ENCODE measurements at regions of chr16 and their contacts with region 1.

Region 1: GRCh38 chr16:27109666-27110523 is 43.2 kb downstream of the C16orf82 start:
- DNase-seq: peak; percentile 47
- ATAC-seq: peak; percentile 98
- H3K4me3 ChIP-seq: peak overlapping the region; percentile 46
- H3K27ac ChIP-seq: peak overlapping the region; percentile 17; the same call in 1 of the 2 replicates
- H3K4me1 ChIP-seq: no peaks in the 10 kb centered on the region
- H3K27me3 ChIP-seq: no peaks in the 10 kb centered on the region
- CTCF ChIP-seq: peak; percentile 91
- POLR2A ChIP-seq: no peak
- RAD21 ChIP-seq: peak; percentile 92

Region 2: DNA sequence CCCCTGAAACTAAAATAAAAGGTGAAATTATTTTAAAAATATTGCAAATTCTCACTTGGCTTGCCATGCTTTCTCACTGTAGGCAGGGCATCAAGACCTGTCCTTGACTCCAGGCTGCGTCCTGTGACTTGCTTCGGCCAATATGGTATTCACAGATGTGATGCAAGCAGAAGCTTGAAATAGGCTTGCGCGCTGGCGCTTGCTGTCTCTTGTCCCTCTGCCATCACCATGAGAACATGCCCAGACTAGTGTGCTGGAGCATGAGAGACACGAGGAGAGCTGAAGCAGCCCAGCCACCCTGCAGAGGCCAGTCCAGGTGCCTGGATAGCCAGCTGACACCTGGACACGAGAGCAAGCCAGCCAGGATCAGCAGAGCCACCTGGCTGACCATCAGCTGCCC is 1830.4 kb before region 1 on chr16:
- CTCF ChIA-PET with region 1: interaction called, 9 read pairs
- POLR2A ChIA-PET with region 1: no interaction called
- dilution Hi-C with region 1: no loop called
- in situ Hi-C with region 1: loop called (anchors 5 kb)
- intact Hi-C with region 1: no loop called
- DNase-seq: no peak
- ATAC-seq: no peak
- H3K4me3 ChIP-seq: no peak overlapping the region
- H3K27ac ChIP-seq: no peak overlapping the region
- H3K4me1 ChIP-seq: no peaks in the 10 kb centered on the region
- H3K27me3 ChIP-seq: no peaks in the 10 kb centered on the region
- CTCF ChIP-seq: no peak
- POLR2A ChIP-seq: no peak
- RAD21 ChIP-seq: no peak

Region 3: GRCh38 chr16:25838724-25839186 is 1271.1 kb before region 1 on chr16:
- CTCF ChIA-PET with region 1: interaction called, 8 read pairs
- POLR2A ChIA-PET with region 1: no interaction called
- dilution Hi-C with region 1: no loop called
- in situ Hi-C with region 1: loop called (anchors 5 kb)
- intact Hi-C with region 1: loop called (anchors 1 kb)
- DNase-seq: peak; percentile 41
- ATAC-seq: peak; percentile 68
- H3K4me3 ChIP-seq: no peak overlapping the region
- H3K27ac ChIP-seq: no peak overlapping the region
- H3K4me1 ChIP-seq: no peaks in the 10 kb centered on the region
- H3K27me3 ChIP-seq: no peaks in the 10 kb centered on the region
- CTCF ChIP-seq: peak; percentile 75
- POLR2A ChIP-seq: no peak
- RAD21 ChIP-seq: peak; percentile 58

Region 4: DNA sequence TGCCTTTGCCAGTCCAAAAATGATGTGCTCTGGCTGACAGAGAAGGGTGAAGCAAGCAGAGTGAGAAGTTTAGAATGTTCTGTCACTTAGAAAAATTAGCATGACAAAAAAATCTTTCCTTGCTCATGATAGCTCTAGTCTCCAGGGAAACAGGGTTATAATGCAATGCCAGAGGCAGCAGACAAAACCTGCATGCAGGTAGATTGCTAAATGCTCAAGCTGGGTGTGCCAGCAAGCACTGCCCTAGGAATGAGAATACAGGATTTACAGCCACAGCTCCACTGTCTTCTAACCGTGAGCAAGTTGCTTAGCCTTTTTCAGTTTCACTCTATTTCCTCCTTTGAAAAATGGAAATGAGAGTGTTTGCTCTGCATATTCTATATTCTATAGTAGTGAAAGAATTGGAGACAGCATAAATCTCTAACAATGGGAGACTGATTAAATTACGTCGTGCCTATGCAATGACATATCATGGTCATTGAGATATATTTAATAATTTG is 559.7 kb before region 1 on chr16:
- CTCF ChIA-PET with region 1: no interaction called
- POLR2A ChIA-PET with region 1: no interaction called
- dilution Hi-C with region 1: no loop called
- in situ Hi-C with region 1: no loop called
- intact Hi-C with region 1: no loop called
- DNase-seq: no peak
- ATAC-seq: no peak
- H3K4me3 ChIP-seq: no peak overlapping the region
- H3K27ac ChIP-seq: no peak overlapping the region
- H3K4me1 ChIP-seq: no peaks in the 10 kb centered on the region
- H3K27me3 ChIP-seq: no peaks in the 10 kb centered on the region
- CTCF ChIP-seq: no peak
- POLR2A ChIP-seq: no peak
- RAD21 ChIP-seq: no peak

Region 5: GRCh38 chr16:26951947-26952346 is 157.9 kb before region 1 on chr16:
- CTCF ChIA-PET with region 1: no interaction called
- POLR2A ChIA-PET with region 1: no interaction called
- dilution Hi-C with region 1: no loop called
- in situ Hi-C with region 1: no loop called
- intact Hi-C with region 1: no loop called
- DNase-seq: peak; percentile 18
- ATAC-seq: peak; percentile 79
- H3K4me3 ChIP-seq: no peak overlapping the region
- H3K27ac ChIP-seq: no peak overlapping the region
- H3K4me1 ChIP-seq: no peaks in the 10 kb centered on the region
- H3K27me3 ChIP-seq: peaks cover 4% of the 10 kb centered on the region; the same call in 1 of the 2 replicates
- CTCF ChIP-seq: no peak
- POLR2A ChIP-seq: no peak
- RAD21 ChIP-seq: no peak

Region 6: DNA sequence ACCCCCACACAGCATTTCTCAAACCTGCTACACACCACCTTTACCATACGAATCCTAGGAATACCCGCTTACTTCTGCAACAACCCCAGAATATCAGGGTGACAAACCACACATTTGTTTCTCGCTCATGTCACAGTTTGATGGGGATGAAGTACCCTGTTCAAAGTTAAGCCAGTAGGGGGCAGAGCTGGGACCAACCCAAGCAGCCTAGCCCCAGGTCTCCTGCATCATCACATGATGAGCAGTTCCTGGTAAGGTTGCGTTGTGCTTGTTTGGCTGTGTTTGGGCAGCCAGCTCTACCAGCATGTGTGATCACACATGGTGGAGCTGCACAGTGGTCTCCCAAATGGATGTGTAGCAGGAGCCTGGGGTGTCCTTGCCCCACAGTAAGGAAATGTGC is 146.8 kb before region 1 on chr16:
- CTCF ChIA-PET with region 1: interaction called, 9 read pairs
- POLR2A ChIA-PET with region 1: no interaction called
- dilution Hi-C with region 1: no loop called
- in situ Hi-C with region 1: no loop called
- intact Hi-C with region 1: loop called (anchors 1 kb)
- DNase-seq: peak; percentile 36
- ATAC-seq: peak; percentile 54; the same call in 1 of the 2 replicates
- H3K4me3 ChIP-seq: no peak overlapping the region
- H3K27ac ChIP-seq: no peak overlapping the region
- H3K4me1 ChIP-seq: no peaks in the 10 kb centered on the region
- H3K27me3 ChIP-seq: peaks cover 18% of the 10 kb centered on the region
- CTCF ChIP-seq: peak; percentile 43
- POLR2A ChIP-seq: no peak
- RAD21 ChIP-seq: peak; percentile 52

Region 7: DNA sequence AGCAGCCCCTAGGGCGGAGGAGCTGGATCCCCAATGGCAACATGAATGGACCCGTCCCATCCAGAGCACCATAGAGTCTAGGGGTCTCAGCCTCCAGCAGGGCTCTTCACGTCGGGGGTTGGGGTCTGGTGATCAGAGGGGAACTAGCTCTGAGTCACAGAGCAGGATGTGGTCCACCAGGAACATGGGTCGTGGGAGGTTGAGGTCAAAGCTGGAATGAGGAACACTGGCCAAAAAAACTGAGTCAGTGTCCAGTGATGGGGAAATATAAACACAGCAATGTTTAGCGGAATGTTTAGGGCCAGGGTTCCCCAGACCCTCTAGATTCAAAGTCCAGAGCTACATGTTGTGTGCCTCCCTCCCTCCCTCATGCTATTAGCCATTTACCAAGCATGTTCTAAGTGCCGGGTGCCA is 122.3 kb before region 1 on chr16:
- CTCF ChIA-PET with region 1: interaction called, 3 read pairs
- POLR2A ChIA-PET with region 1: interaction called, 15 read pairs
- dilution Hi-C with region 1: no loop called
- in situ Hi-C with region 1: no loop called
- intact Hi-C with region 1: no loop called
- DNase-seq: peak; percentile 94
- ATAC-seq: peak; percentile 87
- H3K4me3 ChIP-seq: no peak overlapping the region
- H3K27ac ChIP-seq: peak overlapping the region; percentile 98
- H3K4me1 ChIP-seq: peaks cover 32% of the 10 kb centered on the region
- H3K27me3 ChIP-seq: no peaks in the 10 kb centered on the region
- CTCF ChIP-seq: no peak
- POLR2A ChIP-seq: peak; percentile 36; the same call in 1 of the 2 replicates
- RAD21 ChIP-seq: no peak

Region 8: DNA sequence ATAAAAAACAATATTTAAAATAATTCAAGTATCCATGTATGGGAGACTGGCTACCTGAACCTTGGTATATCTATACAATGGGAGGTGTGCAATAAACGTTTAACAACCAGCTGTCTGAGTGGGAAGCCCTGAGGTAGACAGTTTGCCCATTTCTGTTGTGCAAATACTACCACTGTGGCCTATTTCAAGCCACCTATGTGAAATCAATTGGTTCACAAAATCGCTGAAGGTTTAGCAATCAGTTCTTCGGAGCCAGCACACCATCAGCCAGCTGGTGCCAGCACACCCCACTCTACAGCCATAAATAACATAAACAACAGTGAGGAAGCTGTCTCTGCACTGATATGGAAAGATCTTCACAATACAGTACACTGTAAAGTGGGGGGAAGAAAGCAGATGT is 46.7 kb after region 1 on chr16:
- CTCF ChIA-PET with region 1: no interaction called
- POLR2A ChIA-PET with region 1: no interaction called
- dilution Hi-C with region 1: no loop called
- in situ Hi-C with region 1: no loop called
- intact Hi-C with region 1: no loop called
- DNase-seq: no peak
- ATAC-seq: peak; percentile 64
- H3K4me3 ChIP-seq: no peak overlapping the region
- H3K27ac ChIP-seq: no peak overlapping the region
- H3K4me1 ChIP-seq: 0 out of 2 replicates have a peak, but pooled peaks cover 1% of the 10 kb centered on the region
- H3K27me3 ChIP-seq: no peaks in the 10 kb centered on the region
- CTCF ChIP-seq: peak; percentile 32
- POLR2A ChIP-seq: no peak
- RAD21 ChIP-seq: peak; percentile 24; the same call in 1 of the 2 replicates

Region 9: GRCh38 chr16:27455700-27456099 is 345.8 kb after region 1 on chr16:
- CTCF ChIA-PET with region 1: no interaction called
- POLR2A ChIA-PET with region 1: no interaction called
- dilution Hi-C with region 1: no loop called
- in situ Hi-C with region 1: no loop called
- intact Hi-C with region 1: loop called (anchors 2 kb)
- DNase-seq: no peak
- ATAC-seq: no peak
- H3K4me3 ChIP-seq: no peak overlapping the region
- H3K27ac ChIP-seq: no peak overlapping the region
- H3K4me1 ChIP-seq: peaks cover 1% of the 10 kb centered on the region
- H3K27me3 ChIP-seq: no peaks in the 10 kb centered on the region
- CTCF ChIP-seq: no peak
- POLR2A ChIP-seq: no peak
- RAD21 ChIP-seq: no peak